Ascending aorta (tissue), 2 donors: ENCODE measurements at regions of chr10 and their contacts with region 1.

Region 1: GRCh38 chr10:43689955-43690771 is 41.5 kb upstream of the ZNF32 start:
- DNase-seq: peak in 1 of 2 donors; percentile 93
- H3K4me3 ChIP-seq: peak overlapping the region; percentile 57 to 87
- H3K27ac ChIP-seq: peak overlapping the region; percentile 79 to 87
- H3K4me1 ChIP-seq: peaks cover 4 to 10% of the 10 kb centered on the region in 2 donors
- H3K27me3 ChIP-seq: no peaks in the 10 kb centered on the region
- CTCF ChIP-seq: peak; percentile 88 to 95 (median 93)

Region 2: DNA sequence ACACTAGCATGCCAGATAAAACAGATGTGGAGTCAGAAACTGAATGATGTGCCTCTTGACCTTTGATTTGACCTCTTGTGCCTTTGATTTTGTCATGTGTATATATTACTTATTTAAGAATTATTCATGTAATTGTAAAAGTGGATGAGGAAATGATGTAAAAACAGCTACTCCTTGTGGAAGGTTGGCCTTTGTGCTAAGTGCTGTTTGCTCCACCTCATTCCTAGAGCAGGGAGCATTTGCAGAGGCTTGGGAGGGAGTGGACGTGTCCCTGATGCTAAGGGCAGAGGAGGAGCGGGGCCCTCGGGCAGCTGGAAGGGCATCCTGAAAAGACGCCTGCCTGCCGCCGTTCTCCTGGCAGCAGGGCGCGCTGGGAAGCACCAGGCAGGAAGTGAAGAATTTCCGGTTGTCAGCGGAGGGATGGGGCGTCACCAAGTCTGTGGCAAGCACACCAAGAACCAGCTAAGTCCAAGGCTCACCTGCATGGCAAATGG is 156.1 kb after region 1 on chr10:
- intact Hi-C with region 1: loop called (anchors 5 kb)
- DNase-seq: peak in 1 of 2 donors; percentile 80
- H3K4me3 ChIP-seq: no peak overlapping the region
- H3K27ac ChIP-seq: peak overlapping the region; percentile 60 to 74
- H3K4me1 ChIP-seq: peaks cover 3 to 38% of the 10 kb centered on the region in 2 donors
- H3K27me3 ChIP-seq: no peaks in the 10 kb centered on the region
- CTCF ChIP-seq: no peak

Region 3: DNA sequence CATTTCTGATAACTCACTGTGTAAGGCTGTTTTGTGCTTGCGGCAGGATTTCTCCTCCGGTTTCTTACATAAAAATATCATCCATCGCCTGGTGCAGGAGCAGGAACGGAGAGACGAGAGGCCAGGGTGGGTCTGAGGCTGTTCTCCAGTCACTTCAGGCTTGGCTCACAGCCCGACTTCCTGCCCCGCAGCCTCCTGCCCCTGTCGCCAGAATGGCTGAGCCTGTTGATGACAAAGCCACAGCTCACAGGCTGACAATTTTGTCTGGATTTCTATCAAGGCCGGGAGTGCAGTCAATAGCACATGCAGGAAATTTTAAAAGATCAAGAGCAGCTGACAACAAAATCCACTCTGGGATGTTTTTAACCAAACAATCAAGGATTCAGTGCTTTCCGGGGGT is 188.2 kb after region 1 on chr10:
- intact Hi-C with region 1: no loop called
- DNase-seq: peak in 1 of 2 donors; percentile 76
- H3K4me3 ChIP-seq: no peak overlapping the region
- H3K27ac ChIP-seq: peak overlapping the region; percentile 36 to 40
- H3K4me1 ChIP-seq: no peaks in the 10 kb centered on the region
- H3K27me3 ChIP-seq: no peaks in the 10 kb centered on the region
- CTCF ChIP-seq: no peak

Region 4: GRCh38 chr10:43905512-43906236 is 215.5 kb after region 1 on chr10:
- intact Hi-C with region 1: loop called (anchors 5 kb)
- DNase-seq: no peak
- H3K4me3 ChIP-seq: peak overlapping the region in 1 of 2 donors; percentile 19
- H3K27ac ChIP-seq: peak overlapping the region; percentile 40 to 65
- H3K4me1 ChIP-seq: peaks cover 5 to 30% of the 10 kb centered on the region in 2 donors
- H3K27me3 ChIP-seq: no peaks in the 10 kb centered on the region
- CTCF ChIP-seq: no peak

Region 5: DNA sequence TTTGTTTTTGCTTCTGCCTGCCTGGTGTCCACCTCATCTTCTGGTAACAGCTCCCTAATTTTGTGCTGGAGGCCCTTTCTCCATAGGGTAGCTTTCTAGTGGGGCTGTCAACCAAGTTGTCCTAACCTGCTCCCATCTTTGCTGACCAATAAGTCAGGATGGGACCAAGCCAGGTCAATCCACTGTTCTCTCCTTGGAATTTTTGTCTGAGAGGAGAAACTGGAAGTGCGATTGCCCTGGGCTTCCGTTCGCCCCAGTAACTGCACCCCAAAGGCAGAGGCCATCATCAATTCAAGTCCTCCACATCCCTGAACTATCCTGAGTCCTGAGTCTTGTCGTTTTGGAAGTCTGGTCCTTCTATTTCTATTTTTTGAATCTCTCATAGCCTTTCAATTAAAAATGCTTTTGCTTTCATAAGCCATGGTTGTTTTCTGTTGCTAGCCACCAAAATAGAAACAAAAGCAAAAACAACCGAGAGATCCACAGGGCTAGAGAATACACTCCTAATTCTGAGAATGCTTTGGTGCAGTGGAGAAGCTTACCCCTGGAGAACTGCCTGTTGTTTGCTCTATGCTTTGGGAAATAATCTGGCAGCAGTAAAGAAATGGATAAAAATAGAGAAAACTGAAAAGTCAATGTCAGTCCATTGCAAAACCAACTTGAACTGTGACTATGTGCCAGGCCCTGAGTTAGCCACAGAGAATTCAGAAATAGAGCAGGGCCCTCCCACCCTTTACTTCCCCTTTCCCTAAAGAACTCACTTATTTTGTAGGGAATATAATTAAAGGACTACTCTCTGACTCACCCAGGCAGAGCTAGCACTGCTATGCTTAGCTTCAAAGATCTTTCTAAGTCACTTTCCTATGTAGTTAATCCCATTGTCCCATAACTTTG is 326.7 kb after region 1 on chr10:
- intact Hi-C with region 1: loop called (anchors 5 kb)
- DNase-seq: peak in 1 of 2 donors; percentile 79
- H3K4me3 ChIP-seq: no peak overlapping the region
- H3K27ac ChIP-seq: peak overlapping the region; percentile 70 to 71
- H3K4me1 ChIP-seq: peaks cover 7 to 19% of the 10 kb centered on the region in 2 donors
- H3K27me3 ChIP-seq: no peaks in the 10 kb centered on the region
- CTCF ChIP-seq: no peak

Region 6: GRCh38 chr10:44310762-44311562 is 620.8 kb after region 1 on chr10:
- intact Hi-C with region 1: loop called (anchors 1 kb)
- DNase-seq: peak; percentile 40 to 92
- H3K4me3 ChIP-seq: peak overlapping the region; percentile 49 to 59
- H3K27ac ChIP-seq: no peak overlapping the region
- H3K4me1 ChIP-seq: peaks cover 0 to 5% of the 10 kb centered on the region in 2 donors
- H3K27me3 ChIP-seq: no peaks in the 10 kb centered on the region
- CTCF ChIP-seq: peak; percentile 94 to 97 (median 95)

Region 7: DNA sequence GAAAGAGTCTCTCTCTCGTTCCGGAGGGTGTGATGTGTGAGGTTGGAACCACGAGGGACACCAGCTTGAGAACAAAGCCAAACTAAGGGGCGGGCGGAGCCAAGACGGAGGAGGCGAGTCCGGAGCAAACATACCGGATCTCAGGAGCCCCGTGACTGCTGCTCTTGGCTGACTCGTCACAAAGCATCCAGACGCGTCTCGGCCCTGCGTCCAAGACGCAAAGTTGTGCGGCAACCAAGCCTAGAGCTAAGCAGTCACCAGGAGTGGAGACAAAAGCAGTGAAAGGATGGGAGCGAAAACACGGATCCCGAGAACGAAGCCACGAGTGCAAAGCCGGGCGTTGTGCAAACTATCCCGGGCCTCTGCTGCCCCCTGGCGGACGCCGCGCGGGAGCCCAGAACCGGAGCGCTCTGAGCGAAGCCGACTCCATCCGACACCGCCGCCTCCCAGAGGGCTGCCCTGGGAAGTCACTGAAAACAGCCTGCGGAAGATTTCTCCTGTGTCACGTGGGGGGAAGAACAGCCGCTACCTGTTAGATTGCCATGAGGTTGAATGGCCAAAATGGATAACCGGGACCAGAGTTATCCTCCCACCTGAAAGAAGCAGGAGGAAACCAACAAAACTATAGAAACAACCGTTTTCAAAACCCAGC is 1174.6 kb after region 1 on chr10:
- intact Hi-C with region 1: loop called (anchors 5 kb)
- DNase-seq: peak in 1 of 2 donors; percentile 93
- H3K4me3 ChIP-seq: peak overlapping the region; percentile 51 to 68
- H3K27ac ChIP-seq: peak overlapping the region; percentile 29 to 58
- H3K4me1 ChIP-seq: peaks cover 0 to 14% of the 10 kb centered on the region in 2 donors
- H3K27me3 ChIP-seq: no peaks in the 10 kb centered on the region
- CTCF ChIP-seq: peak; percentile 91 to 99 (median 93)